H1 (cell line): ENCODE measurements at regions of chr1 and their contacts with region 1.

Region 1: GRCh38 chr1:27392096-27392777 is at the start of gene GPR3:
- DNase-seq: peak; percentile 82 to 97
- H3K4me3 ChIP-seq: peak within 1 kb of the TSS; percentile 61 to 82 (median 70)
- H3K27ac ChIP-seq: peak within 1 kb of the TSS; percentile 45; the same call in 1 of the 2 replicates
- H3K4me1 ChIP-seq: peaks cover 2 to 19% (median 12%) of the 10 kb centered on the region in 4 experiments
- H3K27me3 ChIP-seq: no peaks in the 10 kb centered on the region
- CTCF ChIP-seq: peak in 2 of 3 experiments; percentile 55 to 60; a peak in 3 of 4 replicates
- EP300 ChIP-seq: no peak
- POLR2A ChIP-seq: no peak
- RAD21 ChIP-seq: peak; percentile 16 to 36; a peak in 3 of 4 replicates
- total RNA-seq, gene GPR3: 9.4 and 9.9 TPM in 2 replicates

Region 2: GRCh38 chr1:27269276-27269675 is 123.0 kb before region 1 on chr1:
- CTCF ChIA-PET with region 1: no interaction called
- POLR2A ChIA-PET with region 1: no interaction called
- DNase-seq: no peak
- H3K4me3 ChIP-seq: no peak overlapping the region
- H3K27ac ChIP-seq: no peak overlapping the region
- H3K4me1 ChIP-seq: no peaks in the 10 kb centered on the region
- H3K27me3 ChIP-seq: no peaks in the 10 kb centered on the region
- CTCF ChIP-seq: no peak
- EP300 ChIP-seq: no peak
- POLR2A ChIP-seq: no peak
- RAD21 ChIP-seq: no peak

Region 3: DNA sequence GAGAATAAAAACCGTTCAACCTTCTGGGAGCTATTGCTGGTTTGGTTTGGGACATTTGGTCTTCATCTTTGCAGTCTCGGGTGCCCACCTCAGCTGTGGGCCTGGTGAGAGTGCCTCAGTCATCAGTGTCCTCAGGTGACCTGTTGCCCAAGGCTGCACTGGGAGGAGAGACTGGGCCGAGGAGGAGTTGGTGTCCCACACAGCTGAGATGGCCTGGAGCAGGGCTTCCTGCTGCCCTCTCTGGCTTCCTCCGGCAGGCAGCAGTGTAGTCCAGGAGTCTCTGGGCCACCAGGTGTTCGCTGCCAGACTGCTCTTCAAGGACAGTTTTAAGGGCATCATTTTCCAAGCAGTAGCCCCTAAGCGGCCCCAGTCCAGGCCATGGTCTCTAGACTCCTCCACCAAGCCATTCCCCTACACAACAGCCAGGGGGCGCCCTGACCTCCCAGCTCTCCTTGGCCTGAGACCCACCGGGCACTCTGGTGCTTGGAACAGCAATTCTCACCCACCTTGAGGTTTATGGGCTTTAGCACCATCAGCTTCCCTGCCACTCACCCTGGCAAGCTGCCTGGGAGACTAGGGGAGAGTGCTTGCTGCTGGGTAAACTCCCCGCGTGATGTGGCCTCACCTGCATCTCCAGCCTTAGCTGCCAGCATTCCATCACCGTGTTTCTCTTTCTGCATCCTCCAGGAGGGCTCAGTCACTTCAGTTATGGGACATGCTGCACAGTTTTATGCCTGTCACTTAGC is 59.5 kb before region 1 on chr1:
- CTCF ChIA-PET with region 1: interaction called, 48 read pairs
- POLR2A ChIA-PET with region 1: no interaction called
- DNase-seq: peak in 1 of 2 experiments; percentile 86
- H3K4me3 ChIP-seq: no peak overlapping the region
- H3K27ac ChIP-seq: no peak overlapping the region
- H3K4me1 ChIP-seq: no peaks in the 10 kb centered on the region
- H3K27me3 ChIP-seq: no peaks in the 10 kb centered on the region
- CTCF ChIP-seq: peak; percentile 89 to 97 (median 95)
- EP300 ChIP-seq: no peak
- POLR2A ChIP-seq: no peak
- RAD21 ChIP-seq: peak; percentile 64 to 75

Region 4: DNA sequence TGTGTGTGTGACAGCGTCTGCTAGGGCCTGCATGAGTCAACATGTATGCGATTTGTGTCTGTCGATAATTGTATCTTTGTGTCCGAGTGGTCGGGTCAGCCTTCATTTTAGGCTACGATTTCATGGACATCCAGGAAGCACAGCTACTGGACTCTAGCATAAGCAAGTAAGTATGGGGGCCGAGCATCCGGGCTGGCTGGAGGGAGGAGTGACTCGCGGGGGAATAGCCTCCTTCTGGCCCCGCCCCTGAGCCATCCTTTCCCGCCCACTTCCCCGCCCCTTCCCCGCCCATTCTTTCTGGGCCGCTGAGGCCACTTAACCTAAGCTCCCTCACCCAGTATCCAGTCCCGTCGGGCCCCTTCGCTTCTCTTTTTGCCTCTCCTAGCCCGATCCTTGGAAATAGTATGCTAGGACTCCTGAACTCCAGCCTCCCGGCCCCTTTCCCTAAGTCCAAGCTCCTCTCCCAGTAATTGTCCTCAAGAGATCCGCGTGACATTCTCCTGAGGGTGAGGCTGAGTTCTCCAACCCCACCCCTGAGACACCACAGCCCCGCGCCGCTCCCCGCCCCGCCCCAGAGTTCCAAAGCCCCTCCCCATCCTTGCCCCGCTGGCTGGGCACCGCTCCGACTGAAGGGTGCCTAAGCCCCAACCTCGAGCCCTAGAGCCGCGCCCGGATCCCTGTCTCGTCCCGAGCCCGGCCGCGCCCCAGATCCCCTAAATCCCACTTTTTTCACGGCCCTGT is 26.7 kb before region 1 on chr1:
- CTCF ChIA-PET with region 1: interaction called, 625 read pairs
- POLR2A ChIA-PET with region 1: interaction called, 10 read pairs
- DNase-seq: peak in 1 of 2 experiments; percentile 86
- H3K4me3 ChIP-seq: peak overlapping the region; percentile 62 to 71 (median 64)
- H3K27ac ChIP-seq: no peak overlapping the region
- H3K4me1 ChIP-seq: peaks cover 6 to 20% (median 8%) of the 10 kb centered on the region in 4 experiments
- H3K27me3 ChIP-seq: peaks cover 5 to 15% (median 11%) of the 10 kb centered on the region in 4 experiments; a peak in 6 of 7 replicates
- CTCF ChIP-seq: no peak
- EP300 ChIP-seq: peak in 1 of 2 experiments; percentile 98; a peak in 1 of 3 replicates
- POLR2A ChIP-seq: peak in 1 of 2 experiments; percentile 51; a peak in 2 of 3 replicates
- RAD21 ChIP-seq: no peak

Region 5: DNA sequence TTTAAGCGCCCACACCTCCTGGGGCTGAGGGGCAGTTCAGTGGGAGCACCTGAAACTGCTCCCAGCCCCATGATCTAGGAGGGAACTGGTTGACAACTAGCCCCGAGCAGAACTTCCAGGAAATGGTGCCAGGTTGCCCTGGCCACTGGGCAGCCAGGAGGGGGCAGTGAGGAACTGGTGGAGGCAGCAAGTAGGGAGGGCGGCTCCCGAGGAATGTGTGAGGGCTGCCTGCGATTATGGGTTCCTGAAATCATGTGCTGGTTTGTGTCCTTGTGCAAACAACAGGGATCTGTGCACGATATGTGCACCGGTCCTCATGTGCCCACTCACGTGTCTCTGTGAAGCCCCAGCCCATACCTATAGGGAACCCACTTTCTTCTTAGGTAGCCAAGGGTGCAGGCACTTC is 10.1 kb after region 1 on chr1:
- CTCF ChIA-PET with region 1: interaction called, 87 read pairs
- POLR2A ChIA-PET with region 1: interaction called, 4 read pairs
- DNase-seq: peak in 1 of 2 experiments; percentile 76
- H3K4me3 ChIP-seq: no peak overlapping the region
- H3K27ac ChIP-seq: peak overlapping the region; percentile 1; the same call in 1 of the 2 replicates
- H3K4me1 ChIP-seq: peaks cover 13 to 48% (median 22%) of the 10 kb centered on the region in 4 experiments
- H3K27me3 ChIP-seq: no peaks in the 10 kb centered on the region
- CTCF ChIP-seq: peak; percentile 63 to 85 (median 84)
- EP300 ChIP-seq: no peak
- POLR2A ChIP-seq: 0 out of 3 replicates have a peak, but pooled peaks of 1 of the 2 experiments have one; percentile 46
- RAD21 ChIP-seq: peak; percentile 62 to 69

Region 6: DNA sequence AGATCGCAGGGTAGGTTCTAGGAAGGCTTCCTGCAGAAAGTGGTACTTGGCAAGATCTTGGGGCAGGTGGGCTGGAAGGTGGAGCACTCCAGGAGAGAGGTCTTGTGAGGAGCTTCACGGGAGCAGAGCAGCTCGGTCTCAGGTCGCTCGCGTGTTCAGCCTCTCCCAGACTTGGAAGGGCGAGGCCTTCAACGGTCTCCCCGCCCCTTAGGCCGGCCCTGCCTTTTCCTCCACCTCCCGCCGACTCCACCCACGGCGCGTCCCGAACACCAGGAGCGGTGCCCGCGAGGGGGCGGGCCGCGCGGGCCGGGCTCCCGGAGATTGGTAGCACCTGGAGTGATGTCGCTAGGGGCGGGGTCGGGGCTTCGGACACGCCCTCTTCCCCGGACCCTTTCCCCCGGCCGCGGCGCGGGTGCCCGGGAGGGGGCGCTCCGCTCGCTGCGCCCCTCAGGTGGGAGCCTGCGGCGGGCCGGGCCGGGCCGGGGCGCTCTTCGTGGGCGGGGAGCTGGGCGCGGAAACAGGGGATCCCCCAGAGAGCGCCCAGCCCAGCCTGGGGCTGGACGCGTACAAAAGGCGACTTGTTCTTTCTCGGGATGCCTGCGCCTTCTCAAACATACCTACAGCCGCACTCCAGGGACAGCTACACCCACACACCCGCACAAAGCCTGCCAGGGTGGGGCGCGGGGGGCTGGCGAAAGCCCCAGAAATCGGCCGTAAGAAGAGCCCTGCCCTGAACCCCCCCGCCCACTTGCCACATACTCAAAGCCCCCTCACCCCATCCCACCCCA is 176.3 kb after region 1 on chr1:
- CTCF ChIA-PET with region 1: interaction called, 863 read pairs
- POLR2A ChIA-PET with region 1: no interaction called
- DNase-seq: peak; percentile 80 to 97
- H3K4me3 ChIP-seq: peak overlapping the region in 3 of 4 experiments; percentile 1 to 43 (median 29); a peak in 6 of 8 replicates
- H3K27ac ChIP-seq: peak overlapping the region; percentile 1; the same call in 1 of the 2 replicates
- H3K4me1 ChIP-seq: peaks cover 37 to 77% (median 67%) of the 10 kb centered on the region in 4 experiments
- H3K27me3 ChIP-seq: no peaks in the 10 kb centered on the region
- CTCF ChIP-seq: peak in 2 of 3 experiments; percentile 73 to 91; a peak in 3 of 4 replicates
- EP300 ChIP-seq: no peak
- POLR2A ChIP-seq: no peak
- RAD21 ChIP-seq: peak; percentile 32 to 69